Common myeloid progenitor, CD34-positive (primary cell): ENCODE measurements at regions of chr2 and their contacts with region 1.

Region 1: DNA sequence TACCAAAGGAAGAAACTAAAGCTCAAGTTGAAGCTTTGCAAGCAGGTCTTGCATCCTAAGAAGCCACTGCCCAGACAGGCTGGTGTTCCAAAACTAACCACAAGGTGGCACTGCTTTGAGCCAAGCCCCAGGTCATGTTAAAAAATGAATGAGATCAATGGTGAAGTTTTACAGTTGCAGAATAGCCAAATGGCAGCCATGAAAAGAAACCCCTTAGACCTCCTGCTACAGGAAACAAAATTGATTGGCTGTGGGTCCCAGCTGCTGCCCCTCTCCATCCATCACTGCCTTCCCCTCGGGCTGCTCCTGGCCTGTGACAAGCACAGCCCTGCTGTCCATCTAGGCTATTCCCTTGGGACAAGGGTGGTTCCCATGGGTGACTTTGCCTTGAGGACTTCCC is 20.7 kb upstream of the MREG start:
- DNase-seq: peak; percentile 74 to 88 (median 80)
- H3K4me3 ChIP-seq: no peak overlapping the region
- H3K27ac ChIP-seq: no peak overlapping the region
- H3K4me1 ChIP-seq: peaks cover 0 to 3% (median under 1%) of the 10 kb centered on the region in 4 experiments
- H3K27me3 ChIP-seq: no peaks in the 10 kb centered on the region

Region 2: DNA sequence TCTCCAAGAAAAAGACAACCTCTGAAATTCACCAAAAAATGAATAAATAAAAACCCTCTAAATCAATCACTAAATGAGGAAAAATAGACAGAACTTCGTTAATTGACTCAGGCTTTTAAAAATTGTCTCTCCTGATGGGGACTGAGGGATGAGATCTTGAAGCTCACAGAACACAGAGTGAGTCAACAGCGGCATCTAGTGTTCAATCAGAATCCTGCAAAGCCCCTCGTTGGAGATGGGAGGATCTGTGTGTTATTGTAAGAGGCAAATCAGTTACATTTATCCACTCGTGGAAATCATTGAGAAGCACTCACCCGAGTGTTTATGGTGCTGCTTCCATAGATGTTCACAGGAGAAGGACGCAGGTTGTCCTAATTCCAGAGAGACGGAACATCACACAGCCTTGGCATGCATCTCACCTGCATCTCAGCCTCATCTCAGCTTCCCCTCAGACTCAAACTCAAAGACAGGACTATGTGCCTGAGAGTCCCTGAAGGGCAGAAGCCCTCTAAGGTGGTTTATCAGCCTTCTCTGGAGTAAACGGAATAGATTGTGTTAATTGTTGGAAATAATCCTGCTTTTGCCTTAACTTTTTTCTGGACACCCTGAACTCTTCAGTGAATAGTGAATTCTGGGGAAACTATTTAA is 102.7 kb before region 1 on chr2:
- CTCF ChIA-PET with region 1: no interaction called
- POLR2A ChIA-PET with region 1: no interaction called
- DNase-seq: peak; percentile 62 to 79 (median 72)
- H3K4me3 ChIP-seq: no peak overlapping the region
- H3K27ac ChIP-seq: no peak overlapping the region
- H3K4me1 ChIP-seq: peaks cover 0 to 8% (median 3%) of the 10 kb centered on the region in 4 experiments
- H3K27me3 ChIP-seq: no peaks in the 10 kb centered on the region

Region 3: DNA sequence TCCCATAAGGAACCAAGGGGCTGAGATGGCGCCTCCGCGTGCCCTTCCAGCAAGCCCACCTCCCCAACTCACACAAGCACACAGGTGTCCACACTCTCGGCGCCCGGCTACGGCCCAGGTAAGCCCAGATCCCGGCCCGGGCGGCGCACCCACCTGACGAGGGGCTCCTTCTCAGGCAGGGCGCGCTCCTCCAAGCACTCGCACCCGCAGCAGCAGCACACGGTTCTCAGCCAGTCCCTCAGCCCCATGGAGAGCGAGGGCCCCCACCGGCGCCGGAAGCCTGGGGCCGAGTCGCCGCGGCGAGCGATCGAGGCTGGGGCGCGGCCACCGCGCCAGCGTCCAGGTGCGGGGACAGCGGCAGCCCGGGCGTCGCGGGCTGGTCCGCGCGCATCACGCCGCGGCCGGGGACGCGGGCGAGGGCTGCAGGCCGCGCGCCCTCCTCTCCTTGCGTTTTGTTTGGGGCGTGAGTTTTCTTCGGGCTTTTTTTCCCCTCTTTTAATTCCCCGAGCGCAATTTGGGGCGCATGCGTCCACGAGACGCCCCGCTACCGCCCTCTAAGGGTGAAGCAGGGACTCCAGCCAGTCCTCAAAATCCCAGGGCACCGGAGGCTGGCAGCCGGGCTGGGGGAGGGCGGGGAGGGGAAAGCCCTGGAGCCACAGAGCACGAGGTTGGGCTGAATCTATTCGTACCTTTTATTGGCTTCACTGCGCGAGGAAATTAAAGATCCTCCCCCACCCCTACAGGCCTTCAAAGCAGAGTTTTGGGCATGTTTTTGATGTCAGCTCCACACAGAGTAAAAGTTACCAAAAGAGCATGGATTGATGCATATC is 20.8 kb before region 1 on chr2 and contains the start of gene MREG:
- CTCF ChIA-PET with region 1: interaction called, 64 read pairs
- POLR2A ChIA-PET with region 1: no interaction called
- DNase-seq: peak; percentile 85 to 93 (median 93)
- H3K4me3 ChIP-seq: peak within 1 kb of the TSS; percentile 79 to 94 (median 88)
- H3K27ac ChIP-seq: peak within 1 kb of the TSS; percentile 61 to 79
- H3K4me1 ChIP-seq: peaks cover 20 to 54% (median 42%) of the 10 kb centered on the region in 4 experiments
- H3K27me3 ChIP-seq: no peaks in the 10 kb centered on the region

Region 4: DNA sequence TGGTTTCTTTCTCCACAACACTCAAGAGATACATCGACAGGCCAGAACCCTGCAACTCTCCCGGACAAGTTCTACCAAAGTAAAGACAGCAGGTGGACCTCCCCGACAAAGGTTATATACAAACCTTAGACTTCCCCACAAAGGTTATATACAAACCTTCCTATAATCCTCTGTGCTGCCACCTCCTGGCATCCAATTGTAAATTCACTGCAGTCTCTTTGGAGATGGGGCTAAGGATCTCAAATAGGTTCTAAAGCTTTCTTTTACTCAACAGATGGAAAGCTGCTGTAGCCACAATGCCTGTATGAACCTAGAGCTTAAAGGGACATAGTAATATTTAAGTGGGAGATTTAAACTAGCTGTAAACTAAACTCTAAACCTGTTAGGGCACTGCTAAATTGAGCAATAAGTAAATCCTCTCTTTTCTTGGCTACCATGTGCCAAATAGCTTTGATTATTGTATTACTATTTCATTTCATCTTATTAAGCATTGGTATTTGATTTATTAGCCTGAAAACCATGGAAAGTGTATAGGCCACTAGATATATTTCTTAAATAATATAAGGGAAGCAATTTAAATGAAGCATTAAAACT is 10.9 kb before region 1 on chr2:
- CTCF ChIA-PET with region 1: interaction called, 64 read pairs
- POLR2A ChIA-PET with region 1: interaction called, 3 read pairs
- DNase-seq: peak; percentile 53 to 74 (median 65)
- H3K4me3 ChIP-seq: no peak overlapping the region
- H3K27ac ChIP-seq: no peak overlapping the region
- H3K4me1 ChIP-seq: peaks cover 0 to 3% (median 0%) of the 10 kb centered on the region in 4 experiments
- H3K27me3 ChIP-seq: no peaks in the 10 kb centered on the region

Region 5: DNA sequence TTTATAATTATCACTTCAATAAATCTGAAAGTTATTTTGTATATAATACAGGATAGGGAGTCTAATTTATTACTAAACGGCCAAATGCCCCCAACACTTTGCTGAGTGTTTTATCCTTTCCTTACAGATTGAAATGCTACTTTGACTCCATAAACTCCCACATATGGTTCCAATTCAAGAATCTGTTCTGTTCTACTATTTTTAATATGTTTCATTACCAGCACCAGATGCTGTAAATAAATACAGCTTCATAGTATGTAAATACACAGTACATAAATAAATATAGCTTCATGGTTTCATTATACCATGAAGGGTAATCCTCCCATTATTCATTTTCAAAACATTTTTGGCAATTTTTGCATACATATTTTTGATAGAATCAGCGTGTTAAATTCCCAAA is 13.3 kb after region 1 on chr2:
- CTCF ChIA-PET with region 1: interaction called, 15 read pairs
- POLR2A ChIA-PET with region 1: no interaction called
- DNase-seq: no peak
- H3K4me3 ChIP-seq: no peak overlapping the region
- H3K27ac ChIP-seq: no peak overlapping the region
- H3K4me1 ChIP-seq: no peaks in the 10 kb centered on the region
- H3K27me3 ChIP-seq: no peaks in the 10 kb centered on the region

Region 6: DNA sequence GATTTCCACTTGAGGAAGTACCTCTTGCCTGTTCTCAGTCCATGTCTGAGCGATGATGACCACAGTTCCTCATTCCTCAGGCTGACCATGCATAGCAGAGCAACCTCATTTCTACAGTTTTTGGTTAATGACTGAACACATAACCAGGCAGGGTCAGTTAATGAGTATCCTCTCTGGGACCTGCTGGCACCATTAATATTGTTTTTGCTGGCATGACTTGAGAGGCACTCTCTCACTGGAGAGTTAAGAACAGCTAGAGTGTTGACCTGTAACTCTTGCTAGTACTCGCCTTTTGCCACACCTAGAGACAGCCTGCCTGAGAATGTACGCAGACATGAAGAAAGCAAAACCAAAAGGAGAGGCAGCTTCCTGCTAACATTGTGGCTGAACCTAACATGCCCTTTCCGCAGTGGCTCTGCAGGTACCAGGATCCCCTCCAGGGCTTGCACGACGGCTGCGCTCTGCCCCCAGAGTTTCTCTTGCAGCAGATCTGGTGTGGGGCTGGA is 23.7 kb after region 1 on chr2:
- CTCF ChIA-PET with region 1: interaction called, 12 read pairs
- POLR2A ChIA-PET with region 1: no interaction called
- DNase-seq: peak in 2 of 3 donors; percentile 50 to 58
- H3K4me3 ChIP-seq: peak overlapping the region in 5 of 7 experiments; percentile 19 to 68 (median 32)
- H3K27ac ChIP-seq: peak overlapping the region in 1 of 2 experiments; percentile 30
- H3K4me1 ChIP-seq: peaks cover 0 to 10% (median 9%) of the 10 kb centered on the region in 4 experiments
- H3K27me3 ChIP-seq: no peaks in the 10 kb centered on the region